ENCODE measurements at regions of chr13 and their contacts with region 1.

Region 1: GRCh38 chr13:38914070-38914469 is 76.6 kb downstream of the STOML3 start:
- DNase-seq: no peak
- ATAC-seq: peak; percentile 27; the same call in 2 of the 3 replicates
- H3K4me3 ChIP-seq: no peak overlapping the region
- H3K27ac ChIP-seq: no peak overlapping the region
- H3K4me1 ChIP-seq: no peaks in the 10 kb centered on the region
- H3K27me3 ChIP-seq: no peaks in the 10 kb centered on the region
- CTCF ChIP-seq: no peak
- EP300 ChIP-seq: no peak
- POLR2A ChIP-seq: no peak
- RAD21 ChIP-seq: no peak

Region 2: DNA sequence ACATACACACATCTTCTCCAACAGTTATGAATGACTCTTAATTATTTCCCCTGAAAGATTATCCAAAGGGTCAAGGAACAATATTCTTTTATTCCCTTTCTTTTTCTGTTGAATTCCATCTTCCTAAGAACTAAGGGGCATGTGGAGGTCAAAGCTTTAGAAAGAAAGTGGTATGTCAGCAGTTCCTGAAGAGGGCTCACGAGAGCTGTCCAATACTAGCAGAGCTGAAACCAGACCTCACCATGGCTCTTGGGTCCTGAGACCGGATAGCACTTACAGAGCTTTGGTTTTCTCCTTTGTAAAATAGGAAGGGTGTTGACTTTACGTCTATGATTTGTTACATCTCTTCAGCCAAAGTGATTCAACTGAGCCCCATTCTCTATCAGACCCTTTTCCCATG is 337.0 kb before region 1 on chr13:
- CTCF ChIA-PET with region 1: no interaction called
- POLR2A ChIA-PET with region 1: no interaction called
- RAD21 ChIA-PET with region 1: interaction called, 3 read pairs
- SMC1A ChIA-PET with region 1: no interaction called
- in situ Hi-C with region 1: no loop called
- intact Hi-C with region 1: loop called (anchors 5 kb)
- DNase-seq: no peak
- ATAC-seq: peak; percentile 57; the same call in 1 of the 3 replicates
- H3K4me3 ChIP-seq: no peak overlapping the region
- H3K27ac ChIP-seq: no peak overlapping the region
- H3K4me1 ChIP-seq: no peaks in the 10 kb centered on the region
- H3K27me3 ChIP-seq: no peaks in the 10 kb centered on the region
- CTCF ChIP-seq: 0 out of 6 replicates have a peak, but pooled peaks of 1 of the 3 experiments have one; percentile 3
- EP300 ChIP-seq: no peak
- POLR2A ChIP-seq: no peak
- RAD21 ChIP-seq: no peak

Region 3: GRCh38 chr13:38582133-38582532 is 331.9 kb before region 1 on chr13:
- CTCF ChIA-PET with region 1: no interaction called
- POLR2A ChIA-PET with region 1: no interaction called
- RAD21 ChIA-PET with region 1: interaction called, 3 read pairs
- SMC1A ChIA-PET with region 1: no interaction called
- in situ Hi-C with region 1: no loop called
- intact Hi-C with region 1: loop called (anchors 5 kb)
- DNase-seq: no peak
- ATAC-seq: peak; percentile 85
- H3K4me3 ChIP-seq: no peak overlapping the region
- H3K27ac ChIP-seq: no peak overlapping the region
- H3K4me1 ChIP-seq: no peaks in the 10 kb centered on the region
- H3K27me3 ChIP-seq: no peaks in the 10 kb centered on the region
- CTCF ChIP-seq: peak; percentile 17 to 53 (median 29); a peak in 4 of 6 replicates
- EP300 ChIP-seq: no peak
- POLR2A ChIP-seq: no peak
- RAD21 ChIP-seq: peak; percentile 66

Region 4: GRCh38 chr13:38686577-38687245 is 227.4 kb before region 1 on chr13 and contains the start of gene FREM2:
- CTCF ChIA-PET with region 1: interaction called, 9 read pairs
- POLR2A ChIA-PET with region 1: no interaction called
- RAD21 ChIA-PET with region 1: interaction called, 9 read pairs
- SMC1A ChIA-PET with region 1: interaction called, 3 read pairs
- in situ Hi-C with region 1: no loop called
- intact Hi-C with region 1: loop called (anchors 5 kb)
- DNase-seq: no peak
- ATAC-seq: peak; percentile 72
- H3K4me3 ChIP-seq: no peak within 1 kb of the TSS
- H3K27ac ChIP-seq: no peak within 1 kb of the TSS
- H3K4me1 ChIP-seq: no peaks in the 10 kb centered on the region
- H3K27me3 ChIP-seq: peaks cover 0 to 9% of the 10 kb centered on the region in 2 experiments
- CTCF ChIP-seq: no peak
- EP300 ChIP-seq: no peak
- POLR2A ChIP-seq: no peak
- RAD21 ChIP-seq: no peak
- polyA plus RNA-seq, gene FREM2: 0.02 to 0.03 TPM

Region 5: GRCh38 chr13:38866649-38867048 is 47.4 kb before region 1 on chr13:
- CTCF ChIA-PET with region 1: interaction called, 11 read pairs
- POLR2A ChIA-PET with region 1: no interaction called
- RAD21 ChIA-PET with region 1: interaction called, 3 read pairs
- SMC1A ChIA-PET with region 1: interaction called, 3 read pairs
- in situ Hi-C with region 1: no loop called
- intact Hi-C with region 1: no loop called
- DNase-seq: no peak
- ATAC-seq: no peak; the same call in 2 of the 3 replicates
- H3K4me3 ChIP-seq: no peak overlapping the region
- H3K27ac ChIP-seq: no peak overlapping the region
- H3K4me1 ChIP-seq: no peaks in the 10 kb centered on the region
- H3K27me3 ChIP-seq: no peaks in the 10 kb centered on the region; a peak in 1 of 4 replicates
- CTCF ChIP-seq: no peak; a peak in 1 of 6 replicates
- EP300 ChIP-seq: no peak
- POLR2A ChIP-seq: no peak
- RAD21 ChIP-seq: no peak; the same call in 1 of the 2 replicates

Region 6: GRCh38 chr13:39016787-39017186 is 102.7 kb after region 1 on chr13:
- CTCF ChIA-PET with region 1: interaction called, 4 read pairs
- POLR2A ChIA-PET with region 1: no interaction called
- RAD21 ChIA-PET with region 1: no interaction called
- SMC1A ChIA-PET with region 1: no interaction called
- in situ Hi-C with region 1: no loop called
- intact Hi-C with region 1: loop called (anchors 5 kb)
- DNase-seq: no peak
- ATAC-seq: peak; percentile 86
- H3K4me3 ChIP-seq: no peak overlapping the region
- H3K27ac ChIP-seq: peak overlapping the region; percentile 20; the same call in 1 of the 2 replicates
- H3K4me1 ChIP-seq: no peaks in the 10 kb centered on the region
- H3K27me3 ChIP-seq: no peaks in the 10 kb centered on the region
- CTCF ChIP-seq: peak; percentile 61 to 66 (median 65)
- EP300 ChIP-seq: no peak
- POLR2A ChIP-seq: no peak
- RAD21 ChIP-seq: peak; percentile 52